Astrocyte of the cerebellum (primary cell): ENCODE measurements at regions of chr2 and their contacts with region 1.

Region 1: DNA sequence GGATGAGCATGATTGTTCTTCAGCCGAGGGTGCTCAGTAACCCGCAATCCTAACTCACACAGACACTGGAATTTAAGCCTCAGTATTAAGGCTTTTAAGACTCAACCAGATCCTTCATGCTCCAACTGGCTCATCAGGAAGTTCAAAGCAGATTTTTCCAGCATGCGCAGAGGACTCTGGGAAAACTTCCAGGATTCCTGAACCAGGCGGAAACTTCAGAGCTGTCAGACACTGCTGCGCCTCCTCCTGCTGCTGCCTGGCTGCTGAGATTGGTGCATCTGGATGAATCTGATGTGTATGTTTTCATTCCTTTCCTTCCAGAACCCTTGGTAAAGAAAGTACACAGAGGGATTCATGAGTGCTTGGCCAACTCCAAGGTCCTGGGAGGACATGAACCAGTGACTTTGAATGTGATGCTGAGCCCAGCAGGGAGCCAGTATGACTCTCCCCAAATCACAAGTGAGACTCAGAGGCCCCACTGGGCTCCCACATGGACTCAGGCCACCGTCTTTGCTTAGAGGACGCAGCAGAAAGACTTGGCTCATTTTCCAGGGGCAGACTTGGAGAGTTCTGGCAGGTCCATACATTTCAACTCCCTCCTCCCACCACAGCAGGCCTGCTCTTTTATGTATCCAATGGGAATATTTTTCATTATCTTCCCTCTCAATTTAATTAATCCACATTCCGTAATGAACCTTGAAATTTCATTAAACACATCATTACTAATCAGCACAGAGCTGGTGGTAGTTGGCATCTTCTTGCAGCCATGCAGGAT is 143.5 kb upstream of the HDAC4 start:
- DNase-seq: peak; percentile 15
- H3K4me3 ChIP-seq: no peak overlapping the region
- CTCF ChIP-seq: no peak

Region 2: GRCh38 chr2:239411549-239412319 is 132.6 kb before region 1 on chr2:
- in situ Hi-C with region 1: loop called (anchors 10 kb)
- DNase-seq: no peak
- H3K4me3 ChIP-seq: no peak overlapping the region
- CTCF ChIP-seq: no peak

Region 3: DNA sequence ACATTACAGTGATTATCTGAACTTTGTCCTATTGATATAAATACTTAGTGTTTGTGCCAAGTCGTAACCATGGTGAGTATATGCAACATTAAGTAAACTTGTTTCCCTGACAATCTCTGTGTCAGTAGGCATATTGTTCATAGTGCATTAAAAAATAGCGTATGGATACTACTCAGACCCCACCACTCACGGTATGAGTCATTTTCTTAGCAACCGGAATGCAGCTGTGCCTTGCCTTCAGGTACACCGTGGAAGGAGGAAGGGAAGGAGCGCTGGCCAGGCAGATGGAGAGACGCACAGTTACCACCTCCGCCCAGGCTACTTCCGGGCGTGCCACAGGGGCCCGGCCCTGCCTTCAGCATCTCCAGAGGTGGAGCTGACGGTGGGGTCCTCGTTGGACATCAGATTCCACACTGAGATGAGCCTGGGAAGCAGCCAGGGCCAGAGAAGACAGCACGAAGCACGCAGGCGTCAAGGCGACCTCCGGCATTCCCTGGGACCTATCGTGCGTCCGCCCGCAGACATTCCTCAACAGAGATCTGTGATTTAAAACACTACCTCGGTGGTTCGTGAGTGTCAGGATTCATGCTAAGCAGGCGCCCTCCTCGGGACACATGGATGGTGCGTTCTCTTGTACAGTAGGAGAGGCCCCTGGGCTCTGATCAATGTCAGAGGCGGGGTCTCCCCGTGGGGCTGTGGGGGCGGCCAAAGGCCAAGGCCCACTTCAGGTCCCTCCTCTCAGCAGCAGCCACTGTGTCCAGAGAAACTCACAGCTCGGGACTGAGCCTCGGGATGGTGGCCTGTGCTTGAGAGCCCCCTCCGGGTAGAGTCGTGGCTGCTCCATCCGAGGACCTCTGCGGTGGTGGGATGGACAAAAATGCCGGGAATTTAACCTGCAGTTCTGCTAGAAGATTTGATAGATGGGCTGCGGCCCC is 61.3 kb before region 1 on chr2:
- in situ Hi-C with region 1: loop called (anchors 10 kb)
- DNase-seq: no peak
- H3K4me3 ChIP-seq: no peak overlapping the region
- CTCF ChIP-seq: no peak

Region 4: GRCh38 chr2:239594773-239595608 is 50.7 kb after region 1 on chr2:
- in situ Hi-C with region 1: loop called (anchors 5 kb)
- DNase-seq: no peak
- H3K4me3 ChIP-seq: no peak overlapping the region
- CTCF ChIP-seq: no peak